CD8-positive, alpha-beta memory T cell (primary cell): ENCODE measurements at regions of chr2 and their contacts with region 1.

Region 1: DNA sequence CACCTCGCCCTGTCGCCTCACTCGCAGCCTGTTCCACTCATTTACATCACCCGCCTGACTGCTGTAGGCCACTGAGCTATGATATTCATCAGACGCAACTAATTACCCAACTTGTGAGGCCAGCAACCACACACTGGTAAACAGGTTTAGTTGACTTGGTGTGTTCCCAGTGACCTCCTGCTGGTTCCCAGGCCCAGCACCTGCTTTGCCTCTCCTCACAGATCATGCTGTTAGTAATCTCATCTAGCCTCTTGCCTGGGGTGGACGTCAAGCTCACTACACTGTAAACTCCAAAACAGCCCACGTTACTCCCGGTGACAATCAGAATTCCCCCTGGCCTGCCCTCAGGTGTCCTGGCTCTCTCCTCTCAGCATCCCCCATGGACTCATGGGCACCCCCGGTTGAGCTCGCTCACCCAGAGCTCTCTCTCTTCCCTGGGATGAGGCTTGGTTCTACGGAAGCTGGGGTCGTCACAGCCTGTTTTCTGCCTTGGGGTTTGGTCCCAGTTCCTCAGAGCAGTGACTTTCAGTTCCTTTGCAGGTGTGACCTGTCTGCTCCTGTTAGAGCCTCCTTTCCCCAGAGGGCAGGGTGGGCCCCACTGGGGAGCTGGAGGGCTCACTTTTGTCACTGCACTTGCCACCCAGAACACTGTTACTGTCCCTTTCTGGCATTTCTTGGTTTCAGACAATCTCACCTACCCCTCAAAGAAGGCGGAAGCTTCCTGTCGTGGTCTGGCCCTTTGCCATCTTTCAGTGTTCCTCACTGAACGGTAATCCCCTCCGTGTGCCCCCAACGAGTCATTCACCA is 40.3 kb downstream of the INPP5D start:
- DNase-seq: peak; percentile 55 to 87 (median 70)
- H3K4me3 ChIP-seq: peak overlapping the region; percentile 42
- H3K4me3 Mint-ChIP-seq: peak overlapping the region; percentile 59 to 91 (median 84)
- H3K27ac ChIP-seq: peak overlapping the region; percentile 49
- H3K27ac Mint-ChIP-seq: peak overlapping the region; percentile 84 to 98 (median 95)
- H3K4me1 ChIP-seq: peaks cover 49% of the 10 kb centered on the region
- H3K4me1 Mint-ChIP-seq: peaks cover 77 to 88% (median 87%) of the 10 kb centered on the region in 3 donors
- H3K27me3 ChIP-seq: no peaks in the 10 kb centered on the region
- H3K27me3 Mint-ChIP-seq: peaks cover 0 to 1% of the 10 kb centered on the region in 2 donors

Region 2: DNA sequence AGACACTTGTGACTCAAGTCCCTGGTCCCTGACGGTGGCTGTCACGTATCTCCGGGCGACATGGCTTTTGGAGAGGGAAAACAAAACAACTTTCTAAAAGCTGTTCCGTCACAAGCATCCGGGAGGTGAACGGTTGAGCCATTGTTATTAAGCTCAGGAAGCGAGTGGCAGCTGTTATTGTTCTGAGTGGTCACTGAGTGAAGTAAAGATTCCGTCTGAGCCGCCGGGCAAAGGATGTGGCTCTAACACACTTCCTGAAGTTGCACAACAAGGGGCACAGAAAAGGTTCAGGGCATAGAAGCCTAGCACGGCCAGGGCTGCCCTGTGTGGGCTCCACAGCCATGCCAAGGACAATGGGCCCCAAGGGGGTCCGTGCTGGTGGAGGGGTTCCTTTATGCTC is 15.9 kb before region 1 on chr2:
- CTCF ChIA-PET with region 1: interaction called, 11 read pairs
- POLR2A ChIA-PET with region 1: interaction called, 10 read pairs
- DNase-seq: peak in 4 of 5 donors; percentile 30 to 71 (median 56)
- H3K4me3 ChIP-seq: peak overlapping the region; percentile 35
- H3K4me3 Mint-ChIP-seq: peak overlapping the region; percentile 80 to 91 (median 87)
- H3K27ac ChIP-seq: peak overlapping the region; percentile 66
- H3K27ac Mint-ChIP-seq: peak overlapping the region; percentile 95 to 99 (median 98)
- H3K4me1 ChIP-seq: peaks cover 77% of the 10 kb centered on the region
- H3K4me1 Mint-ChIP-seq: peaks cover 89 to 98% (median 97%) of the 10 kb centered on the region in 3 donors
- H3K27me3 ChIP-seq: no peaks in the 10 kb centered on the region
- H3K27me3 Mint-ChIP-seq: no peaks in the 10 kb centered on the region

Region 3: GRCh38 chr2:233121861-233122260 is 21.5 kb after region 1 on chr2:
- CTCF ChIA-PET with region 1: no interaction called
- POLR2A ChIA-PET with region 1: no interaction called
- DNase-seq: no peak
- H3K4me3 ChIP-seq: no peak overlapping the region
- H3K4me3 Mint-ChIP-seq: no peak overlapping the region
- H3K27ac ChIP-seq: no peak overlapping the region
- H3K27ac Mint-ChIP-seq: peak overlapping the region in 3 of 8 donors; percentile 15 to 54 (median 29)
- H3K4me1 ChIP-seq: peaks cover 17% of the 10 kb centered on the region
- H3K4me1 Mint-ChIP-seq: peaks cover 37 to 44% (median 41%) of the 10 kb centered on the region in 3 donors
- H3K27me3 ChIP-seq: no peaks in the 10 kb centered on the region
- H3K27me3 Mint-ChIP-seq: no peaks in the 10 kb centered on the region

Region 4: GRCh38 chr2:233242231-233242927 is 142.0 kb after region 1 on chr2:
- CTCF ChIA-PET with region 1: no interaction called
- POLR2A ChIA-PET with region 1: interaction called, 10 read pairs
- DNase-seq: no peak
- H3K4me3 ChIP-seq: no peak overlapping the region
- H3K4me3 Mint-ChIP-seq: peak overlapping the region in 3 of 7 donors; percentile 28 to 53 (median 34)
- H3K27ac ChIP-seq: no peak overlapping the region
- H3K27ac Mint-ChIP-seq: peak overlapping the region in 6 of 8 donors; percentile 42 to 74 (median 60)
- H3K4me1 ChIP-seq: peaks cover 50% of the 10 kb centered on the region
- H3K4me1 Mint-ChIP-seq: peaks cover 53 to 68% (median 66%) of the 10 kb centered on the region in 3 donors
- H3K27me3 ChIP-seq: no peaks in the 10 kb centered on the region
- H3K27me3 Mint-ChIP-seq: no peaks in the 10 kb centered on the region

Region 5: DNA sequence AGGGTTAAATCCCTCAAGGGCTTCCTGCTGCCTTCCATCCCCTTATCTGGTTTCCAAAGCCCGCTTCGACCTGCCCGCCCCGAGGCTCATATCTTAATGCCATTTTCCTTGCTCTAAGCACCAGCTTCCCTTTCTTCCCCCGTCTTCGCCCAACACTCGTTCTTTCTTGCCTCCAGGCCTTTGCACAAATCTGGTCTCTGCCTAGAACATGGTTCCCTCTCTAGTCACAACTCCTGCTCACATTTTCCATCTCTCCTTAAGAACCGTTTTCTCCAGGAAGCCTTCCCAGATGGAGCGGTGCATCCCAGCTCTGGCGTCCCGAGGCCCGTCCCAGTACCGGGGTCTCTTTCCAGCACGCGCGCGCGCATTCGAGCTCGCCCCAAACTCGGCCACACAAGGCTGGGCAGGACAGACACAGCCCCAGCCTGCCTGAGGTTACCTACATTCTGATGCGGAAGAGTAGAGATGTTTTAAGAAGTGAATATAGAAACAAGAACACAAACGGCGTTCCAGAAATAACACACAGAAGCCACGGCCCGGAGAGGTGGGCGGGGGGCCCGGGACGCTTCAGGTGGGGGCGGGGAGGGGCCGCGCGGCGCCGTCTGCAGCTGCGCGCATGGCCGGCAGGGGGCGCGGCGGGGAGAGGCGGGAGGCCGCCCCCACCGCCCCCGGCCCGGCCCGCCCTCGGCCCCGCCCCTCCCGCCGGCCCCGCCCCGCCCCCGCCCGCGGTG is 253.5 kb after region 1 on chr2 and contains the start of gene DGKD:
- CTCF ChIA-PET with region 1: no interaction called
- POLR2A ChIA-PET with region 1: no interaction called
- DNase-seq: peak; percentile 61 to 77 (median 70)
- H3K4me3 ChIP-seq: peak within 1 kb of the TSS; percentile 75
- H3K4me3 Mint-ChIP-seq: peak within 1 kb of the TSS; percentile 92 to 96 (median 94)
- H3K27ac ChIP-seq: no peak within 1 kb of the TSS
- H3K27ac Mint-ChIP-seq: peak within 1 kb of the TSS; percentile 78 to 99 (median 91)
- H3K4me1 ChIP-seq: peaks cover 47% of the 10 kb centered on the region
- H3K4me1 Mint-ChIP-seq: peaks cover 57 to 72% (median 60%) of the 10 kb centered on the region in 3 donors
- H3K27me3 ChIP-seq: no peaks in the 10 kb centered on the region
- H3K27me3 Mint-ChIP-seq: peaks cover 0 to 3% of the 10 kb centered on the region in 2 donors
- total RNA-seq, gene DGKD: 54.2 to 61.9 TPM